Adrenal gland (tissue), 19 donors: ENCODE measurements at regions of chr4 and their contacts with region 1.

Region 1: DNA sequence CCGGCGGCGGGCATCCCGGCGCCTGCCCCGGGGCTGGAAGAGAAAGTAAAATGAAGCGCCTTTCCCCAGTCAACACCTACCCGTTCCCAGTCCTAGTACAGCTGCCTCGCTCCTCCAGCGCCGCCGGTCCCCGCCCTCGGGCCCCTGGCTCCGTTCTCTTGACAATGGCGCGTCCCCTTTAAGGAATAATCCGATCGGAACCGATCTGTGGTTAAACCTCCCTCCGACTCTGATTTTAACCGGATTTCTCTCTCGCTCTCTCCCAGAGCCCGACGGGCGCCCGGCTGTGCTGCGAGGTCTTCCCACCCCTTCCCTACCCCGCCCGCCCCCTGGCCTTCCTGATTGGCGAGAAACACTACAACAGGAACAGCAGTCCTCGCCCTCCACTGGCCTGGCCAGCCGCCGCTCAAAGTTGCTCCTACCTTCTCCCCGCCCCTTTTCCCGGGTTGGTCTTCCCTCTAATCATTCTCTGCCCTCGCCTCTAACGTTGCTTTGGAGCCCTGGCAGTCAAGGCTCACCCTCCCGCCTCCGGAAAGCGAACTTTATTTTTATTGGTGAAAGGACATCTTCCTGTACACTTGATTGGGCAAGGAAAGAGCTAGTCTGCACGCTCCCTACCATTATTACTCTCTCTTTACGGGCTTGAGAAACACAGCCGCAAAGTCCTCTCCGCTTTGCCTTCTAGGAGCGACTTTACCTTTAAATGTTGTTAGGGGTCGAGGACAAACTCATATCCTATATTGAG is at the start of gene FRYL:
- DNase-seq: peak; percentile 99 to 100 (median 100)
- H3K4me3 ChIP-seq: peak within 1 kb of the TSS; percentile 80 to 100 (median 93)
- H3K27ac ChIP-seq: peak within 1 kb of the TSS; percentile 89 to 97 (median 95)
- H3K4me1 ChIP-seq: peaks cover 9 to 32% of the 10 kb centered on the region in 2 donors
- H3K27me3 ChIP-seq: no peaks in the 10 kb centered on the region
- CTCF ChIP-seq: no peak
- POLR2A ChIP-seq: peak; percentile 63 to 94
- total RNA-seq, gene FRYL: 26.0 to 64.4 (median 46.4) TPM

Region 2: DNA sequence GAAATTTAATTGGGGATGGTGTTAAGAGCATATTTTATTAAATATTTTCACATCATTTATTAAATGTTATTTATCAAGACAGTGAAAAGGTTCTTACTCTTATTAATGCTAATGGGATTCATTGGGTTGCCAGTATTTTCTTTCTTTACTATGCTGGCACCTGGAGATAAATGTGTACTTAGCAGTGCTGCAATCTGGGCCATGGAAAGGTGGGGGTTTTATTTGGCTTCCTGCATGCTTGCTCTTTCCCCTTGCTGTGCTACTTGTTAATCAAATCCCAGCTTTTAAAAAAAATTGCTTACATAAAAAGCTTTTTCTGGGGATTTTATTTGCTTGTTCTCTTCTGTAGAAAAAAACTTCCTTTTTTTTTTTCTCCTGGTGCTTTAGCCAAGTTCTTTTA is 241.8 kb before region 1 on chr4:
- intact Hi-C with region 1: no loop called
- DNase-seq: no peak
- H3K4me3 ChIP-seq: no peak overlapping the region
- H3K27ac ChIP-seq: no peak overlapping the region
- H3K4me1 ChIP-seq: no peaks in the 10 kb centered on the region
- H3K27me3 ChIP-seq: no peaks in the 10 kb centered on the region
- CTCF ChIP-seq: no peak
- POLR2A ChIP-seq: no peak

Region 3: GRCh38 chr4:48578132-48578968 is 201.8 kb before region 1 on chr4:
- intact Hi-C with region 1: loop called (anchors 10 kb)
- DNase-seq: peak; percentile 71 to 87 (median 74)
- H3K4me3 ChIP-seq: no peak overlapping the region
- H3K27ac ChIP-seq: no peak overlapping the region
- H3K4me1 ChIP-seq: no peaks in the 10 kb centered on the region
- H3K27me3 ChIP-seq: no peaks in the 10 kb centered on the region
- CTCF ChIP-seq: peak; percentile 71 to 98 (median 93)
- POLR2A ChIP-seq: no peak

Region 4: DNA sequence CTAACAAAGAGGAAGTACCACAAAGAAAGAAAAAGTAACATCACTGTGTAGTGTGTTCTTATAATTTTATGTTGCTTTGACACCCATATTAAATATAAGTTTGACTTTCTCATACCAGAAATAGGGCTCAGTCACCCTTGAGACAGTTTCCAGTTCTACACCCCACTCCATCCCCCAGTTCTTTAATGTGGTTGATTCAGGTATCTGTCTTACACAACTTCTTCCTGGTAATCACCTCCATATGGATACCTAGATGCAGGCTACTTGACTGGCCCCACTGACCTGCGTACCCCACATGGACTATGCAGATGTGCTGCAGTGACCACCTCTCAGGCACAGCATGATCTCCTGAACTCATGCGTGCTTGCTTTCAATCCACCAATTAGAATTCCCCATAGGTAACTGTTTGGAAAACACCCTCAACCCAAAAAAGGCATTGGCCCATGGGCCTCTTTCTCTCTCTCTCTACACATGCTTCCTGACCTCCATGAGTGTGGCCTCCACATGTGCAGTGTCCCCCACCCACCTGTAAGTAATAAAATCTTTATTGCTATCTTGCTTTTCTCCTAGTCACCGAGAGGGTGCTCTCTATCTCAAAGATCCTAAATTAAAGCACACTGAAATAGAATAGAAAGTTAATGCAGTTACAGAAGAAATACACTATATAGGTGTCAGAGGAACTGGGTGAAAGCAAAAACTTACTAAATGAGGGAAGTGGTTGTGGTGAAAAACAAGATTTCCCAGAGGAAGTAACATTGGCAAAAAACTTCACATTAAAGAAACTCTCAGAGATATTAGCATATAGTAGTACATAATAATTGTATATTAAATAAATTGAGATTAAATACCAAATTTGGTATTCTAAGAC is 191.7 kb before region 1 on chr4:
- intact Hi-C with region 1: loop called in 1 of 2 experiments (anchors 10 kb)
- DNase-seq: no peak
- H3K4me3 ChIP-seq: no peak overlapping the region
- H3K27ac ChIP-seq: no peak overlapping the region
- H3K4me1 ChIP-seq: no peaks in the 10 kb centered on the region
- H3K27me3 ChIP-seq: no peaks in the 10 kb centered on the region
- CTCF ChIP-seq: no peak
- POLR2A ChIP-seq: no peak

Region 5: GRCh38 chr4:48635310-48635709 is 144.9 kb before region 1 on chr4:
- intact Hi-C with region 1: no loop called
- DNase-seq: peak in 3 of 7 donors; percentile 17 to 23 (median 17)
- H3K4me3 ChIP-seq: no peak overlapping the region
- H3K27ac ChIP-seq: no peak overlapping the region
- H3K4me1 ChIP-seq: peaks cover 0 to 32% of the 10 kb centered on the region in 2 donors
- H3K27me3 ChIP-seq: no peaks in the 10 kb centered on the region
- CTCF ChIP-seq: no peak
- POLR2A ChIP-seq: no peak

Region 6: GRCh38 chr4:48739560-48740019 is 40.6 kb before region 1 on chr4:
- intact Hi-C with region 1: no loop called
- DNase-seq: no peak
- H3K4me3 ChIP-seq: no peak overlapping the region
- H3K27ac ChIP-seq: no peak overlapping the region
- H3K4me1 ChIP-seq: peaks cover 5 to 11% of the 10 kb centered on the region in 2 donors
- H3K27me3 ChIP-seq: no peaks in the 10 kb centered on the region
- CTCF ChIP-seq: no peak
- POLR2A ChIP-seq: no peak

Region 7: GRCh38 chr4:48830706-48831531 is 50.7 kb after region 1 on chr4 and contains the start of gene OCIAD1:
- intact Hi-C with region 1: loop called in 1 of 2 experiments (anchors 10 kb)
- DNase-seq: peak; percentile 97 to 100 (median 99)
- H3K4me3 ChIP-seq: peak within 1 kb of the TSS; percentile 77 to 98 (median 78)
- H3K27ac ChIP-seq: peak within 1 kb of the TSS; percentile 75 to 96 (median 93)
- H3K4me1 ChIP-seq: peaks cover 7 to 16% of the 10 kb centered on the region in 2 donors
- H3K27me3 ChIP-seq: no peaks in the 10 kb centered on the region
- CTCF ChIP-seq: peak in 1 of 6 experiments; percentile 6
- POLR2A ChIP-seq: peak in 1 of 2 donors; percentile 53
- total RNA-seq, gene OCIAD1: 119 to 200 (median 180) TPM

Region 8: GRCh38 chr4:48924416-48924815 is 144.2 kb after region 1 on chr4:
- intact Hi-C with region 1: no loop called
- DNase-seq: no peak
- H3K4me3 ChIP-seq: no peak overlapping the region
- H3K27ac ChIP-seq: no peak overlapping the region
- H3K4me1 ChIP-seq: no peaks in the 10 kb centered on the region
- H3K27me3 ChIP-seq: no peaks in the 10 kb centered on the region
- CTCF ChIP-seq: no peak
- POLR2A ChIP-seq: no peak